Dendritic cell treated with granulocyte-macrophage colony-stimulating factor and Interleukin-4, amounts not matched to agents 40 ng/mL and 50 ng/mL, for 4 days (primary cell): ENCODE measurements at regions of chr5 and their contacts with region 1.

Region 1: GRCh38 chr5:173010547-173011464 is 27.2 kb downstream of the ATP6V0E1 start:
- H3K4me3 Mint-ChIP-seq: no peak overlapping the region
- H3K27ac Mint-ChIP-seq: peak overlapping the region; percentile 53
- H3K4me1 Mint-ChIP-seq: peaks cover 81% of the 10 kb centered on the region
- H3K27me3 Mint-ChIP-seq: no peaks in the 10 kb centered on the region

Region 2: GRCh38 chr5:173057062-173057924 is 46.5 kb after region 1 on chr5:
- intact Hi-C with region 1: loop called (anchors 2 kb)
- H3K4me3 Mint-ChIP-seq: peak overlapping the region; percentile 83
- H3K27ac Mint-ChIP-seq: peak overlapping the region; percentile 87
- H3K4me1 Mint-ChIP-seq: peaks cover 27% of the 10 kb centered on the region
- H3K27me3 Mint-ChIP-seq: no peaks in the 10 kb centered on the region